GM10248 (cell line): ENCODE measurements at regions of chr20 and their contacts with region 1.

Region 1: DNA sequence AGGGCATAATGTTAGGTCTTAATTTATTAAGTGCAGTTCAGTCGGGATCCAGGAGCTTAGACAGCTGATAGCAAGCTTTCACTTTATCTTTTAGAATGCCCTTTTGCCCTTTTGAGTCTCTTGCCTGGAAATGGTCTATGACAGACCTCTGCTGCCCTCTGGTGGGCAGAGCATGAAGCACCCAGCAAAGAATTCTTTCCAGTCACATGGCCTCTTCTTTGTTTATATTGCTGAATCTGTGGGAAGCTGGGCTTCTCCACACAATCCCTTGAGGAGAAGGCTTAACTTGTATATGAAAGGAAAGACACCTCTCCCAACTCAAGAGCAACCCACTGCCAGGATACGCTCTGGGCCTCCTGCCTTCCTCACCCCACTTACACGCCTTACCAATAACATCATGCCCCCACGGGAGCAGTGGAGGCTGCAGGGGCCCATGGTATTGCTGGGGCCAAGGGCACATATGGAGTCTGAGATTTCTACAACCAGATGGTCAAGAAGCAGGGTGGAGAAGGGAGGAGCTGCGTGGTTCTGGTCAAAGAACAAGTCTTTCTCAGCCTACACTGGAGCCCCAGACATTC is 20.4 kb downstream of the WFDC3 start:
- DNase-seq: peak; percentile 80
- CTCF ChIP-seq: peak; percentile 92

Region 2: GRCh38 chr20:45322952-45323383 is 448.3 kb before region 1 on chr20:
- CTCF ChIA-PET with region 1: interaction called, 45 read pairs
- POLR2A ChIA-PET with region 1: no interaction called
- DNase-seq: peak; percentile 63
- CTCF ChIP-seq: peak; percentile 15

Region 3: DNA sequence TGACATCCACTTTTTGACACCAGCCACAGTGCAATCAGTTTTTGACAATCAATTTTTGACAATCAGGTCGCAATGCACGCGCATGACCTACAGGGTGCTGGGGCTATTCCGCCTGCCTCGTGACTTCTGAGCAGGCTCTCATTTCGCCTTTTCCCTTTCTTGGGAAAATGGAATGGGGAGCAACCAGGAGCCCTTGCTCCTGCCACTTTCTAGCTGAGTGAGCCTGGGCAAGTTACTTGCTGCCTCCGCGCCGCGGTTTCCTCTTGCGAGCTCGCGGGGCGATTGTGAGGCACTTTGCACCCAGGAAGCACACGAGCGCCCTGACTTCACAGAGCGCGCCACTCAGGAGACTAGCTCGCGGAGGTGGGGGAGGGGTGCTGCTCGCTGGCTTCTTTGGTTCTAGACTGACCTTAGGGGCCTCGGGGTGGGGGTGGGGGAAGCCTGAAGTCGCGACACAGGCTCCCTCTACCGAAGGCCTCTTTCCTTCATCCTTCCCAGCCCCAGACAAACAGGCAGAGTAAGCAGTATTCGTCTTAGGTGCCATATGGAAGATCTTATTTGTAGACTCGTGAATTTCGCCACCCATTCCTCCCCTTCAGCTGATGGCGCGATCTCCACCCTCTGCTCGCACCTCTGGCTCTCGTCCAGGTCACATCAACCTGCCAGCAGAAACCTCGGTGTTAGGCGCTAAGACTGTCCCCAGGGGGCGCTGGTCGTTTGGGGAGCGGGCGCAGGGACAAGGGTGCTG is 397.7 kb before region 1 on chr20:
- CTCF ChIA-PET with region 1: interaction called, 37 read pairs
- POLR2A ChIA-PET with region 1: no interaction called
- DNase-seq: peak; percentile 84
- CTCF ChIP-seq: peak; percentile 93

Region 4: DNA sequence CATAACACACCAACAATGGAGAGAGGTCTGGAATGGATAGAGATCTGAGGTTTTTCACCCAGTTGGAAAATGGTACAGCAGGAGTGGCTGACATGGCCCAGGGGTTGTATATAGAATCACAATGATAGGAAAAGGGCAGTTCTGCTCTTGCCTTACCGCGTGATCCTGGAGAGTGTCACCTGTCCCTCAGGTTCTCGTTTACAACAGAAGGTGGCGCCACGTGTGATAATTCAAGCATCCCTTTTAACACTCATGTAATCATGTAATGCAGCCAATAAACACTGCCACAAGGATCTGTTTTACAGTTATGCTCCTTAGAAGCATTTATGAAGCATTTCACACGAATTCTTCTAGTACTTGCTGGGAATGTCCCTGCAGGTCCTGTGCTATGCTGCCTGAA is 314.6 kb before region 1 on chr20:
- CTCF ChIA-PET with region 1: interaction called, 49 read pairs
- POLR2A ChIA-PET with region 1: no interaction called
- DNase-seq: peak; percentile 35
- CTCF ChIP-seq: peak; percentile 36

Region 5: DNA sequence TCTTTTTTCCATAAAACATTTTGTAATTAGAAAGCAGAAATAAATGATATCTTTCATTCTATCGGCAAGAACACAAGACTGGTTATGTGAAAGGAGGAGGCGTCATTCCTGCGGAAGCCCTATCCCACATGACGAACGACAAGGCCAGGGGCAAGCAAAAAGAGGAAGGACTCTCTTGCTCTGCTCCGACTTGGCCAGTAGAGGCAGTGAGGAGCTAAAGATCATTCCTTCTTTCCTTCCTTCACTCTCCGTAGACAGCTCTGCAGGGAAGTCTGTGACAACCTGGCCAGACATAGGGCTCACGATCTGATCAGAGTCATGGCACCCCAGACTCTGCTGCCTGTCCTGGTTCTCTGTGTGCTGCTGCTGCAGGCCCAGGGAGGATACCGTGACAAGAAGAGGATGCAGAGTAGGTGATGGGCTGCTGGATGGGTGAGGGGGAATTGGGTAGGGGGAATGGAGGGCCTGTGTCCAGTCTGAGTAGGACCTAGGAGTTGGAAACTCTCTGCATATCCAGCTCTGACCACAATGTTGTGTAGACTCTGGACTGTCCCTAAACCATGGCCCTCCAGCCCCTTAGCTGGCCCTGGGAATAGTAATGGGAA is 141.7 kb before region 1 on chr20 and contains the start of gene WFDC10A:
- CTCF ChIA-PET with region 1: interaction called, 12 read pairs
- POLR2A ChIA-PET with region 1: no interaction called
- DNase-seq: peak; percentile 53
- CTCF ChIP-seq: peak; percentile 50

Region 6: GRCh38 chr20:45946149-45946970 is 175.1 kb after region 1 on chr20:
- CTCF ChIA-PET with region 1: no interaction called
- POLR2A ChIA-PET with region 1: no interaction called
- DNase-seq: no peak
- CTCF ChIP-seq: no peak